ENCODE measurements at regions of chr19 and their contacts with region 1.

Region 1: DNA sequence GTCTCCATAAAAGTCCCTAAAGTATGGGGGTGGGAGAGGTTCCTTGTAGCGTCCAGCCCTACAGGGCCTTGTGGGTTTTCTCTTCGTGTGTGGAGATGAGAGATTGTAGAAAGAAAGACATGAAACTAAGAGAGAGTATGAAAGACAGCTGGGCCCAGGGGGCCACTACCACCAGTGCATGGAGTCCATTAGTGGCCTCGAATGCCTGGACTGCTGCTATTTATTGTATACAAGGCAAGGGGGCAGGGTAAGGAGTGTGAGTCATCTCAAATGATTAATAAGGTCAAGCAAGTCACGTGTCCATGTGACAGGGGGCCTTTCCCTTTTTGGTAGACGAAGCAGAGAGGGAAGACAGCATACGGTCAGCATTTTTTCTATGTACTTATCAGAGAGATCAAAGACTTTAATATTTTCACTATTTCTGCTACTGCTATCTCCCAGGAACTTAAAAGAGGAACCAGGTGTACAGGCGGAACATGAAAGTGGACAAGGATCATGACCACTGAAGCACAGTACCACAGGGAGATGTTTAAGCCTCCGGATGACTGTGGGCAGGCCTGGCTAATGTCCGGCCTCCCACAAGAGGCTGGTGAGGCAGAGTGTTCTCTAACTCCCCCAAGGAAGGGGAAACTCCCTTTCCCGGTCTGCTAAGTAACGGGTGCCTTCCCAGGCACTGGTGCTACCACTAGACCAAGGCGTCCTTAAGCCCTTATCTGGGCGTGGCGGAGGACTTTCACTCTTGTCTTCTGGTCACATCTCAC is 25.5 kb downstream of the FGF21 start:
- DNase-seq: peak; percentile 31 to 86 (median 39)
- ATAC-seq: peak; percentile 76
- H3K4me3 ChIP-seq: no peak overlapping the region
- H3K27ac ChIP-seq: peak overlapping the region; percentile 89
- H3K4me1 ChIP-seq: peaks cover 24 to 34% of the 10 kb centered on the region in 2 experiments
- H3K27me3 ChIP-seq: no peaks in the 10 kb centered on the region
- CTCF ChIP-seq: no peak
- EP300 ChIP-seq: peak; percentile 32; the same call in 1 of the 2 replicates
- POLR2A ChIP-seq: peak; percentile 48
- RAD21 ChIP-seq: no peak

Region 2: GRCh38 chr19:48646001-48646721 is 134.7 kb before region 1 on chr19 and contains the start of gene CA11:
- CTCF ChIA-PET with region 1: interaction called, 16 read pairs
- POLR2A ChIA-PET with region 1: interaction called, 3 read pairs
- in situ Hi-C with region 1: loop called (anchors 5 kb)
- intact Hi-C with region 1: loop called (anchors 1 kb)
- DNase-seq: peak; percentile 71 to 93 (median 92)
- ATAC-seq: peak; percentile 91
- H3K4me3 ChIP-seq: peak within 1 kb of the TSS; percentile 56
- H3K27ac ChIP-seq: peak within 1 kb of the TSS; percentile 27
- H3K4me1 ChIP-seq: peaks cover 19 to 41% of the 10 kb centered on the region in 2 experiments; a peak in 4 of 5 replicates
- H3K27me3 ChIP-seq: no peaks in the 10 kb centered on the region
- CTCF ChIP-seq: peak; percentile 75 to 96 (median 95)
- EP300 ChIP-seq: no peak
- POLR2A ChIP-seq: peak; percentile 48; the same call in 1 of the 2 replicates
- RAD21 ChIP-seq: peak; percentile 89 to 95
- polyA plus RNA-seq, gene CA11: 6.3 to 11.5 TPM

Region 3: DNA sequence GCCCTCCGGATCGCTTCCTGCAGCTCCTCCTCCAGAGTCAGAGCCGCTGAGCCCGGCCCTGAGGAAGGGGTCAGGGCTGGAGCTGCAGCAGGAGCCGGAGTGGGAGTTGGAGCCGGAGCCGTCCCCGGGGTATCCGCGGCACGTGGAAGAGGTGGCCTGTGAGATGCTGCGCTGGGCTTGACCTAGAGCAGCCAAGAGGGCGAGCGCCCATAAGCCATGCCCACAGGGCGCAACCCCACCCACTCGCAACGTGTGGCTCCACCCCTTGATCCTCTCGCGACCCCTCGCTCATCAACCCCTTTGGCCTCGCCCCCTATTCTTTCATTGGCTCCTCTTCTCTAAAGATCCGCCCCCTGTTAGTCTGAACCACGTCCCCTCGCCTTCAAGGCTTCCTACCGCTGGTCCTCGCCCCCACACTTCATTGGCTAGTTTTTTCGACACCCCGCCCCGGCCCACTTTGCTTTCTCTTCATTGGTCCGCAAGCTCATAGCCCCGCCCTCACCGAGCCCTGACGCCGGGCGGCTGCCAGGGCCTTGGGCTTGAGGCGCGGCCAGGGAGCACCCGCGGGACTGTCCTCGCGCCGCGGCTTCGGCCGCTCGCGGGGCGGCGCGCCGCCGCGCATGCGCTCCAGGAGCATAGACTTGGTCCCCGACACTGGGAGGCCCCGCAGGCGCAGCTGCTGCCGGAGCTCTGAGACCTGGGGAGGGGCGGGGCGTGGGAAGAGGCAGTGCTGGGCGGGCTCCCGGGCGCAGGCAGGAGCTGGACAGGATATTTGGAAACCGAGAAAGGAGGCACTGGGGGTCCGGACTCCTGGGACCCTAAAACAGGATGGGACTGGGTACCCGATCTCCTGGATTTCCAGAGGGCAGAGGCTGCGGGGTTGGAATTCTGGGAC is 66.7 kb before region 1 on chr19:
- CTCF ChIA-PET with region 1: no interaction called
- POLR2A ChIA-PET with region 1: no interaction called
- in situ Hi-C with region 1: no loop called
- intact Hi-C with region 1: no loop called
- DNase-seq: peak; percentile 98 to 99 (median 98)
- ATAC-seq: peak; percentile 97
- H3K4me3 ChIP-seq: peak overlapping the region; percentile 73
- H3K27ac ChIP-seq: peak overlapping the region; percentile 70
- H3K4me1 ChIP-seq: peaks cover 18 to 45% of the 10 kb centered on the region in 2 experiments
- H3K27me3 ChIP-seq: no peaks in the 10 kb centered on the region
- CTCF ChIP-seq: peak in 2 of 3 experiments; percentile 31 to 36; a peak in 3 of 6 replicates
- EP300 ChIP-seq: no peak
- POLR2A ChIP-seq: peak; percentile 39; the same call in 1 of the 2 replicates
- RAD21 ChIP-seq: no peak

Region 4: GRCh38 chr19:48738557-48739399 is 42.0 kb before region 1 on chr19:
- CTCF ChIA-PET with region 1: no interaction called
- POLR2A ChIA-PET with region 1: interaction called, 4 read pairs
- in situ Hi-C with region 1: no loop called
- intact Hi-C with region 1: loop called (anchors 2 kb)
- DNase-seq: peak; percentile 97 to 99 (median 98)
- ATAC-seq: peak; percentile 86
- H3K4me3 ChIP-seq: peak overlapping the region; percentile 53
- H3K27ac ChIP-seq: peak overlapping the region; percentile 83
- H3K4me1 ChIP-seq: peaks cover 43 to 56% of the 10 kb centered on the region in 2 experiments
- H3K27me3 ChIP-seq: no peaks in the 10 kb centered on the region
- CTCF ChIP-seq: peak in 2 of 3 experiments; percentile 88 to 98; a peak in 5 of 6 replicates
- EP300 ChIP-seq: peak; percentile 29; the same call in 1 of the 2 replicates
- POLR2A ChIP-seq: peak; percentile 77
- RAD21 ChIP-seq: peak; percentile 81 to 91

Region 5: GRCh38 chr19:49073514-49074378 is 292.9 kb after region 1 on chr19:
- CTCF ChIA-PET with region 1: no interaction called
- POLR2A ChIA-PET with region 1: no interaction called
- in situ Hi-C with region 1: no loop called
- intact Hi-C with region 1: loop called (anchors 5 kb)
- DNase-seq: peak; percentile 76 to 91 (median 82)
- ATAC-seq: peak; percentile 95
- H3K4me3 ChIP-seq: no peak overlapping the region
- H3K27ac ChIP-seq: peak overlapping the region; percentile 52; the same call in 2 of the 3 replicates
- H3K4me1 ChIP-seq: peaks cover 9 to 32% of the 10 kb centered on the region in 2 experiments; a peak in 4 of 5 replicates
- H3K27me3 ChIP-seq: peaks cover 3 to 21% of the 10 kb centered on the region in 2 experiments; a peak in 4 of 5 replicates
- CTCF ChIP-seq: peak; percentile 71 to 84 (median 79)
- EP300 ChIP-seq: no peak
- POLR2A ChIP-seq: 0 out of 2 replicates have a peak, but pooled peaks have one; percentile 35
- RAD21 ChIP-seq: peak; percentile 41 to 70

Measured in K562 (cell line).